CD4-positive, alpha-beta T cell (primary cell): ENCODE measurements at regions of chr3 and their contacts with region 1.

Region 1: DNA sequence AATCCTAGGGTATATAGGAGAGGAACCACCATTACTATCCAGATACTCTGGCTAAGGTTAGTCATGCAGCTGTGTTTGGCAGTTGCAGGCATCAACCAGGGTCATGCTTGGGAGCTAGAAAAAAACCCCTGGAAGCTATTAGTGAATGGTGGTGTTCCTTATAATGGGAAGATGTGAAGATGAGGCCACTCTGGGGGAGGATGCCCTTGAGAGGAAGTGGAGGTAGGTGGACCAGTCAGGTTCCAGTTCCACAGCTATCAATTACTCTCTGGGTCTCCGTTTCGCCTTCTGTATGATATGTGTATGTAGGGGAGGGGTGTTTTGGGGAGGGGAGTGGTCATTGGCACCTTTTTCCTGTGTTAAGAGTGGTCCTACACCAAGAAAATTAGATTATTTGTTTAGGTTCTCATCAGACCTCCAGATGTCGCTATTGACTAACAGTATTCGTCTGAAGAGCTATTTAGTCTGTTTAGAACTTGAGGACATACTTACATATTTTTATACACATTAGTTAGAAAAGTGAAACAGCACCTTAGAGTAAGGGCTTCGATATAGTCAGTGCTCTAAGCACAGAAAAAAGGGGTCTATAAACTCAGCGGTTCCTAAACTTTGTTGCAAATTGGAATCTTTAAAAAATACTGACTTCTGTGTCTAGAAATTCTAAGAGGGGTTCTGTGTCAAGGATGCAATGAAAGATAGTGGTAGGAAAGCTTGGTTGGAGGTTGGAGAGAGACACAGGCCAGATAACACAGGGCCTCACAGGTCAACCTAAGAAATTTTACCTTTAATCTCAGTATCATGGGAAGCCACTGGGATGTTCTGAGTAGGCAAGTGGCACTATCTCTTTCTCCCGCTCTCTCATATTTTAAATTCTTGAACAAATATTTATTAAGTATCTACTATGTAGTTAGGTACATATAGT is 9.1 kb upstream of the HPS3 start:
- DNase-seq: peak in 4 of 14 experiments; percentile 25 to 79 (median 73)
- ATAC-seq: peak; percentile 81
- H3K4me3 ChIP-seq: no peak overlapping the region
- H3K4me3 Mint-ChIP-seq: no peak overlapping the region
- H3K27ac ChIP-seq: no peak overlapping the region
- H3K27ac Mint-ChIP-seq: no peak overlapping the region
- H3K4me1 ChIP-seq: no peaks in the 10 kb centered on the region
- H3K4me1 Mint-ChIP-seq: no peaks in the 10 kb centered on the region
- H3K27me3 ChIP-seq: no peaks in the 10 kb centered on the region
- H3K27me3 Mint-ChIP-seq: peaks cover 4% of the 10 kb centered on the region
- CTCF ChIP-seq: peak; percentile 73

Region 2: GRCh38 chr3:148955544-148956346 is 164.6 kb before region 1 on chr3:
- CTCF ChIA-PET with region 1: interaction called, 8 read pairs
- POLR2A ChIA-PET with region 1: no interaction called
- intact Hi-C with region 1: loop called in 1 of 2 experiments (anchors 5 kb)
- DNase-seq: peak in 5 of 14 experiments; percentile 6 to 65 (median 57)
- ATAC-seq: no peak
- H3K4me3 ChIP-seq: no peak overlapping the region
- H3K4me3 Mint-ChIP-seq: no peak overlapping the region
- H3K27ac ChIP-seq: no peak overlapping the region
- H3K27ac Mint-ChIP-seq: no peak overlapping the region
- H3K4me1 ChIP-seq: no peaks in the 10 kb centered on the region
- H3K4me1 Mint-ChIP-seq: no peaks in the 10 kb centered on the region
- H3K27me3 ChIP-seq: no peaks in the 10 kb centered on the region
- H3K27me3 Mint-ChIP-seq: no peaks in the 10 kb centered on the region
- CTCF ChIP-seq: peak; percentile 38

Region 3: GRCh38 chr3:149273096-149273751 is 152.9 kb after region 1 on chr3:
- CTCF ChIA-PET with region 1: interaction called, 7 read pairs
- POLR2A ChIA-PET with region 1: no interaction called
- intact Hi-C with region 1: loop called (anchors 1 kb)
- DNase-seq: peak in 4 of 14 experiments; percentile 41 to 82 (median 78)
- ATAC-seq: peak; percentile 82
- H3K4me3 ChIP-seq: no peak overlapping the region
- H3K4me3 Mint-ChIP-seq: no peak overlapping the region
- H3K27ac ChIP-seq: no peak overlapping the region
- H3K27ac Mint-ChIP-seq: no peak overlapping the region
- H3K4me1 ChIP-seq: no peaks in the 10 kb centered on the region
- H3K4me1 Mint-ChIP-seq: peaks cover 11% of the 10 kb centered on the region
- H3K27me3 ChIP-seq: no peaks in the 10 kb centered on the region
- H3K27me3 Mint-ChIP-seq: no peaks in the 10 kb centered on the region
- CTCF ChIP-seq: peak; percentile 88

Region 4: DNA sequence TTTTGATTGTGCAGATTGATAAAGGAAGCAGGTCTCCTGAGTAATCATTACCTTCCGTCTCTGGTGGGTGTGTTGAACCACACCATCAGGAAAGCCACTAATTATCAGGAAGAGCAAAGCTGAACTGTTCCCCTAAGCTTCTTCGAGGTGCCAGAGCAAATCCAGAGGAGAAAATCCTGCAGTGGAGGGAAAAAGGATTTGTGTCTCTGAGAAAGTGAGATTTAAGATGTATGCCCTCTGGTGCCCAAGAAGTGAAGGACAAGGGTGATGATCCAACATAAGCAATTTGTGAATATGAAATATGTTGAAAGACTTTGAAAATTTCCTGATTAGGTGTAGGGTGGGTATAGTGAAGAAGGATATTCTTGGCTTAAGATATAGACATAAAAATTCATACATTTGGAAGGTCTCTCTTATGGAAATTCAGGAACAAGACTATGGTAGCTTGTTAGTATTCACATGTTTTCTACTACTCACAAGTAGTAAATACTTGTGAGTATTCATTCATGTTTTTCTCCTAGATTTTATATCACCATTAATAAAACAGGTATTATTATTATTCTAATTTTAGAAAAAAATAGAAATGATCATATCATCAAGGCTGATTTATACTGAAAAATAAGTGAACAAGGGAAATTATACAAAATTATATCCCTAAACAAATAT is 597.2 kb after region 1 on chr3:
- CTCF ChIA-PET with region 1: interaction called, 5 read pairs
- POLR2A ChIA-PET with region 1: no interaction called
- intact Hi-C with region 1: loop called (anchors 1 to 2 kb)
- DNase-seq: peak in 4 of 14 experiments; percentile 15 to 45 (median 34)
- ATAC-seq: no peak
- H3K4me3 ChIP-seq: no peak overlapping the region
- H3K4me3 Mint-ChIP-seq: no peak overlapping the region
- H3K27ac ChIP-seq: no peak overlapping the region
- H3K27ac Mint-ChIP-seq: no peak overlapping the region
- H3K4me1 ChIP-seq: no peaks in the 10 kb centered on the region
- H3K4me1 Mint-ChIP-seq: no peaks in the 10 kb centered on the region
- H3K27me3 ChIP-seq: no peaks in the 10 kb centered on the region
- H3K27me3 Mint-ChIP-seq: no peaks in the 10 kb centered on the region
- CTCF ChIP-seq: peak; percentile 39

Region 5: GRCh38 chr3:149771652-149772271 is 651.5 kb after region 1 on chr3:
- CTCF ChIA-PET with region 1: no interaction called
- POLR2A ChIA-PET with region 1: no interaction called
- intact Hi-C with region 1: loop called (anchors 2 to 5 kb)
- DNase-seq: peak in 10 of 14 experiments; percentile 1 to 58 (median 10)
- ATAC-seq: no peak
- H3K4me3 ChIP-seq: no peak overlapping the region
- H3K4me3 Mint-ChIP-seq: no peak overlapping the region
- H3K27ac ChIP-seq: no peak overlapping the region
- H3K27ac Mint-ChIP-seq: no peak overlapping the region
- H3K4me1 ChIP-seq: no peaks in the 10 kb centered on the region
- H3K4me1 Mint-ChIP-seq: no peaks in the 10 kb centered on the region
- H3K27me3 ChIP-seq: peaks cover 0 to 5% of the 10 kb centered on the region in 2 experiments
- H3K27me3 Mint-ChIP-seq: peaks cover 19% of the 10 kb centered on the region
- CTCF ChIP-seq: peak; percentile 68

Region 6: GRCh38 chr3:150183678-150184425 is 1063.5 kb after region 1 on chr3:
- CTCF ChIA-PET with region 1: no interaction called
- POLR2A ChIA-PET with region 1: no interaction called
- intact Hi-C with region 1: loop called in 1 of 2 experiments (anchors 5 kb)
- DNase-seq: peak; percentile 6 to 71 (median 24)
- ATAC-seq: peak; percentile 75
- H3K4me3 ChIP-seq: peak overlapping the region; percentile 13
- H3K4me3 Mint-ChIP-seq: no peak overlapping the region
- H3K27ac ChIP-seq: no peak overlapping the region
- H3K27ac Mint-ChIP-seq: no peak overlapping the region
- H3K4me1 ChIP-seq: peaks cover 8% of the 10 kb centered on the region
- H3K4me1 Mint-ChIP-seq: no peaks in the 10 kb centered on the region
- H3K27me3 ChIP-seq: peaks cover 0 to 11% of the 10 kb centered on the region in 2 experiments
- H3K27me3 Mint-ChIP-seq: peaks cover 27% of the 10 kb centered on the region
- CTCF ChIP-seq: peak; percentile 47